B cell (primary cell): ENCODE measurements at regions of chrX and their contacts with region 1.

Region 1: GRCh38 chrX:45592101-45592500 is 391.4 kb upstream of the DIPK2B start:
- DNase-seq: no peak
- ATAC-seq: no peak
- H3K4me3 ChIP-seq: no peak overlapping the region
- H3K4me3 Mint-ChIP-seq: no peak overlapping the region
- H3K27ac ChIP-seq: no peak overlapping the region
- H3K27ac Mint-ChIP-seq: no peak overlapping the region
- H3K4me1 ChIP-seq: no peaks in the 10 kb centered on the region
- H3K4me1 Mint-ChIP-seq: no peaks in the 10 kb centered on the region
- H3K27me3 ChIP-seq: peaks cover 0 to 9% (median 0%) of the 10 kb centered on the region in 4 experiments
- H3K27me3 Mint-ChIP-seq: no peaks in the 10 kb centered on the region
- CTCF ChIP-seq: no peak

Region 2: GRCh38 chrX:45571453-45571852 is 20.6 kb before region 1 on chrX:
- CTCF ChIA-PET with region 1: no interaction called
- POLR2A ChIA-PET with region 1: no interaction called
- intact Hi-C with region 1: no loop called
- DNase-seq: no peak
- ATAC-seq: no peak
- H3K4me3 ChIP-seq: no peak overlapping the region
- H3K4me3 Mint-ChIP-seq: no peak overlapping the region
- H3K27ac ChIP-seq: no peak overlapping the region
- H3K27ac Mint-ChIP-seq: no peak overlapping the region
- H3K4me1 ChIP-seq: no peaks in the 10 kb centered on the region
- H3K4me1 Mint-ChIP-seq: no peaks in the 10 kb centered on the region
- H3K27me3 ChIP-seq: no peaks in the 10 kb centered on the region
- H3K27me3 Mint-ChIP-seq: no peaks in the 10 kb centered on the region
- CTCF ChIP-seq: no peak

Region 3: DNA sequence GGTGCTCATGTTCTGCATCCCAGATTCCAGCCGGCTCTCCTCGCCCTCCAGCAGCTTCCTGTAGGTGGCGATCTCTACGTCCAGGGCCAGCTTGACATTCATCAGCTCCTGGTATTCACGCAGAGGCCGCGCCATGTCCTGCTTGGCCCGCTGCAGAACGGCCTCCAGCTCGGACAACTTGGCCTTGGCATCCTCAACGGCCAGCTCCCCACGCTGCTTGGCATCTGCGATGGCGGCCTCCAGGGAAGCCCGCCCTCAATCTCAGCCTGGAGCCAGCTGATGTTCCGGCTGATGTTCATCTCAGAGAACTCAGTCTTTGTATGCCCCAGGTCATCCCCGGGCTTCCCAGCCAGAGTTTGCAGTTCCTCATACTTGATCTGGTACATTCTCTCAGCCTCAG is 40.4 kb after region 1 on chrX:
- CTCF ChIA-PET with region 1: no interaction called
- POLR2A ChIA-PET with region 1: no interaction called
- intact Hi-C with region 1: loop called (anchors 2 kb)
- DNase-seq: no peak
- ATAC-seq: no peak
- H3K4me3 ChIP-seq: no peak overlapping the region
- H3K4me3 Mint-ChIP-seq: no peak overlapping the region
- H3K27ac ChIP-seq: no peak overlapping the region
- H3K27ac Mint-ChIP-seq: no peak overlapping the region
- H3K4me1 ChIP-seq: no peaks in the 10 kb centered on the region
- H3K4me1 Mint-ChIP-seq: no peaks in the 10 kb centered on the region
- H3K27me3 ChIP-seq: no peaks in the 10 kb centered on the region
- H3K27me3 Mint-ChIP-seq: peaks cover 3% of the 10 kb centered on the region
- CTCF ChIP-seq: no peak